Panc1 (cell line): ENCODE measurements at regions of chr3 and their contacts with region 1.

Region 1: DNA sequence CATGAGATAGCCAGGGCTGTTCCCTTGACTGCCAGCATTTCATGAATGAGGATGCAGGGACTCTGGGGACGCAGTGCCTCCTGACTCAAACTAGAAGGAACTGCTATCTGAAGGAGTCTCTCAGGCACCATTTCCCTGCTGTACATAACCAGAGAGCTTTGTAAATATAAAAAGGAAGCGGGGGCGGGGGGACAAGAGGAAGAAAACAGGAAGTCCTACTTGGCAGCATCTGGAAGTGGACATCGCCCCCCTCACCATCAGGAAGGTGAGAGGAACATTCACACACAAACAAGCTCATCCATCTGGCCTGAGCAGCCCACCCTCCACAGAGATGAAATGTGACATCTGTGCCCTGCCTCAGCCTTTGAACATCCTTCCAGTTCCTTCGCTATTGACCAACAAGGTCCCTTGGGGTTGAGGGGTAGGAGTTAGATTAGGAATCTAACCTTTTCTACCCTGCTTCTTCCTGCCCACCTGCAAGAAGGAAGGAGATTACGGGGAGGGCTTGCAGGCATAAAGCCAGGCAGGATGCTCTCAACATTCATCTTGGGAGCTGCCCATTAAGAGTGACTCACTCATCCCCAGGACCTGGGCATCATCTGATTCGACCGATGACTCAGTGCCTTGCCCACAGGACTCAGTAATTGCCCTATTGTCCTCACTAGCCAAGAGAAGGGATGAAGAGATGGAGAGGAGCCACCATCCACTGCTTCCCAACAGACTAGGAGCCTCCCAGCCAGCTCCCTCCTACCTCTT is 31.9 kb downstream of the SH3BP5 start:
- DNase-seq: peak; percentile 17
- ATAC-seq: peak; percentile 90
- H3K4me3 ChIP-seq: no peak overlapping the region
- H3K27ac ChIP-seq: no peak overlapping the region
- H3K4me1 ChIP-seq: no peaks in the 10 kb centered on the region; the same call in 1 of the 2 replicates
- H3K27me3 ChIP-seq: no peaks in the 10 kb centered on the region
- CTCF ChIP-seq: no peak

Region 2: DNA sequence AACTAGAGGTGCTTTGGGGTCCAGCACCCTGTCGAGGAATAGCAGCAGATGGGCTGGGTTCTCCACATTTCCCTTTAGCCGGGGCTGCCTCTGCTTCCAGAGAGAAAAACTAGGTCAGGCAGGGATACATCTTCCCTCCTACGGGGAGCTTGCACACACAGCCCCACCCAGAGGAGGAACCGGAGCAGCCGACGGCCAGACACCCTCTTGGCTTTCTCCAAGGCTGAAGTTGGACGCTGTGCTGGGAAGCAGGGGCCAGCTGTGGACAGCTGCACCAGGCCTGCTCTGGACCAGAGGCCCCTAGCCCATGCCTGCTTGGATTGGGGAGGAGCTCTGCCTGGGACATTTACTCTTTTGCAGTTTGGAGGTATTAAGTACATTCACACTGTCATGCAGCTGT is 397.8 kb before region 1 on chr3:
- CTCF ChIA-PET with region 1: no interaction called
- POLR2A ChIA-PET with region 1: no interaction called
- in situ Hi-C with region 1: no loop called
- intact Hi-C with region 1: no loop called
- DNase-seq: no peak
- ATAC-seq: peak; percentile 68; the same call in 1 of the 2 replicates
- H3K4me3 ChIP-seq: no peak overlapping the region
- H3K27ac ChIP-seq: no peak overlapping the region
- H3K4me1 ChIP-seq: no peaks in the 10 kb centered on the region
- H3K27me3 ChIP-seq: 0 out of 2 replicates have a peak, but pooled peaks cover 3% of the 10 kb centered on the region
- CTCF ChIP-seq: no peak

Region 3: GRCh38 chr3:15246186-15246585 is 54.3 kb before region 1 on chr3:
- CTCF ChIA-PET with region 1: no interaction called
- POLR2A ChIA-PET with region 1: no interaction called
- in situ Hi-C with region 1: no loop called
- intact Hi-C with region 1: no loop called
- DNase-seq: no peak
- ATAC-seq: no peak
- H3K4me3 ChIP-seq: no peak overlapping the region
- H3K27ac ChIP-seq: no peak overlapping the region
- H3K4me1 ChIP-seq: no peaks in the 10 kb centered on the region
- H3K27me3 ChIP-seq: no peaks in the 10 kb centered on the region
- CTCF ChIP-seq: no peak

Region 4: DNA sequence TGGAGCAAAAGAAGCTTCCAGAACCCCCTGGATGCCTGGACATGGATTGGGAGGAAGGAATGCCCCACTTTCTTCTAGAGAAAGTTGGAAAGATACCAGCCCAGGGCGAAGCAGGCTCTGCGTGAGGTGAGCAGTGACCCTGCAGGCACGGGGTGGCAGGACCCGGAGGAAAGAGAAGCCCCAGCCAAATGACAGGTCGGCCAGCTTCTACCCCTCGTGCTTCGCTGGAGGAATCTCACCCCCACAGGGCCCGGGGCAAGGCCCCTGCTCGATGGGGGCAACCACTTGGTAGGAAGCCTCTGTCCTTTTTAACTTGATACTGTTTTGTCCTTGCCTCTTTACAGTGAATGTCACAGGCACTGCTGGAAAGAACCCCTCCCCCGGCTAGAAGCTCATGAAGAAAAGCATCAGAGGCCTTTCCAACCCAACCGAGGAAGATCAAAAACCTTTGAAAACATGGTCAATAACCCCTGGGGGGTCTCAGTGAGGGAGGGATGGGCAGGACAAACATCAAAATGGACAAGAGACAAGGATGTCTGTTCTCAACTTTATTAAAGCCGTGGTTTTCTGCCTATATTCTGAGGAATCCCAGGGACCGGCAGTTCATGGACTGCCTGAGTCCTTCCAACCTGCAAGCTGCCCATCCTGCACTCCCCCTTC is 22.5 kb before region 1 on chr3:
- CTCF ChIA-PET with region 1: interaction called, 11 read pairs
- POLR2A ChIA-PET with region 1: interaction called, 9 read pairs
- in situ Hi-C with region 1: no loop called
- intact Hi-C with region 1: no loop called
- DNase-seq: no peak
- ATAC-seq: no peak
- H3K4me3 ChIP-seq: no peak overlapping the region
- H3K27ac ChIP-seq: no peak overlapping the region
- H3K4me1 ChIP-seq: no peaks in the 10 kb centered on the region
- H3K27me3 ChIP-seq: no peaks in the 10 kb centered on the region
- CTCF ChIP-seq: no peak